ENCODE measurements at regions of chr17 and their contacts with region 1.

Region 1: DNA sequence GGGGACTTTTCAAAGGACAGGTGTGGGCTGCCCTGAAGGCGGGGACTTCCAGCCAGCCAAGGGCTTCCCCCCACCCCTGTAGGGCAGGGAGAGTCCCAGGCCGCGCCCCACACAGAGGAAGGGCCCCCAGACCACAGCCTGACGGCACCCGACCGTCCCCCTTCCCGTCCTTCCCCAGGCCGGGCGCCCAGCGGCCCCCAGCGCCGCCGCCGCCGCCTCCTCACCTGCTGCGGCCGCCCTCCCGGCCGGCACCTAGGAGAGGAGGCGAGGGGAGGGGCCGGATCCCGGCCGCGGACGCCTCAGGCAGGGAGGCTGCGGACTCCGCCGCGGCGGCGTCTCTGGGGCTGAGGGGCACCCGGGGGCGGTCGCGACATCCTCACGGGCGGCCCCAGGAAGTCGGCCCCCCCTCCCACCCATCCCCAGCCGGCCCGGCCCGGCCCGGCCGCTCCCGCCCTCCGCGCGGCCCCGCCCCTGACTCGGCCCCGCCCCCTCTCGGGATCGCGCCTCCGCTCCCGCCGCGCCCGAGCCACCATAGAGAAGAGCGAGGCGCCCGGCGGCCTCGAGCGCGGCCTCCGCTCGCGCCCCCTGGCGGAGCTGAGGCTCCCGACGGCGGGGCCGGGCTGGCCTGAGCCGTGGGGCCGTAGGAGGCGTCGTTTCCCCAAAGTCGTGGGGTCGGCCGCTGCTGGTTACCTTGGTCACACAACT is 25.5 kb upstream of the RFFL start:
- DNase-seq: peak; percentile 87
- H3K4me3 Mint-ChIP-seq: peak overlapping the region; percentile 93
- H3K27ac Mint-ChIP-seq: peak overlapping the region; percentile 95
- H3K4me1 Mint-ChIP-seq: peaks cover 50% of the 10 kb centered on the region
- H3K27me3 Mint-ChIP-seq: no peaks in the 10 kb centered on the region

Region 2: GRCh38 chr17:34961093-34961911 is 127.7 kb before region 1 on chr17 and contains the starts of genes CCT6B and ZNF830:
- intact Hi-C with region 1: loop called (anchors 1 kb)
- DNase-seq: peak; percentile 88
- H3K4me3 Mint-ChIP-seq: peak within 1 kb of the TSS; percentile 100
- H3K27ac Mint-ChIP-seq: peak within 1 kb of the TSS; percentile 100
- H3K4me1 Mint-ChIP-seq: peaks cover 23% of the 10 kb centered on the region
- H3K27me3 Mint-ChIP-seq: no peaks in the 10 kb centered on the region
- total RNA-seq, gene CCT6B: 0.96 and 1.0 TPM in 2 replicates
- total RNA-seq, gene ZNF830: 28.0 and 29.7 TPM in 2 replicates

Region 3: GRCh38 chr17:35022536-35023063 is 66.4 kb before region 1 on chr17:
- intact Hi-C with region 1: loop called (anchors 1 kb)
- DNase-seq: peak; percentile 67
- H3K4me3 Mint-ChIP-seq: peak overlapping the region; percentile 79
- H3K27ac Mint-ChIP-seq: peak overlapping the region; percentile 99
- H3K4me1 Mint-ChIP-seq: peaks cover 70% of the 10 kb centered on the region
- H3K27me3 Mint-ChIP-seq: no peaks in the 10 kb centered on the region

Region 4: GRCh38 chr17:35038453-35038852 is 50.6 kb before region 1 on chr17:
- intact Hi-C with region 1: no loop called
- DNase-seq: no peak
- H3K4me3 Mint-ChIP-seq: no peak overlapping the region
- H3K27ac Mint-ChIP-seq: no peak overlapping the region
- H3K4me1 Mint-ChIP-seq: peaks cover 5% of the 10 kb centered on the region
- H3K27me3 Mint-ChIP-seq: peaks cover 2% of the 10 kb centered on the region

Region 5: GRCh38 chr17:35063514-35064223 is 25.4 kb before region 1 on chr17 and contains the start of gene RFFL:
- intact Hi-C with region 1: loop called (anchors 1 kb)
- DNase-seq: peak; percentile 88
- H3K4me3 Mint-ChIP-seq: peak within 1 kb of the TSS; percentile 49
- H3K27ac Mint-ChIP-seq: peak within 1 kb of the TSS; percentile 87
- H3K4me1 Mint-ChIP-seq: peaks cover 66% of the 10 kb centered on the region
- H3K27me3 Mint-ChIP-seq: no peaks in the 10 kb centered on the region
- total RNA-seq, gene RFFL: 28.1 and 28.2 TPM in 2 replicates

Region 6: GRCh38 chr17:35119368-35120165 is 30.5 kb after region 1 on chr17 and contains the start of gene RAD51D:
- intact Hi-C with region 1: loop called (anchors 1 kb)
- DNase-seq: peak; percentile 73
- H3K4me3 Mint-ChIP-seq: peak within 1 kb of the TSS; percentile 96
- H3K27ac Mint-ChIP-seq: peak within 1 kb of the TSS; percentile 95
- H3K4me1 Mint-ChIP-seq: peaks cover 31% of the 10 kb centered on the region
- H3K27me3 Mint-ChIP-seq: no peaks in the 10 kb centered on the region
- total RNA-seq, gene RAD51D: 29.8 and 34.9 TPM in 2 replicates